ENCODE measurements at regions of chr17 and their contacts with region 1.

Region 1: DNA sequence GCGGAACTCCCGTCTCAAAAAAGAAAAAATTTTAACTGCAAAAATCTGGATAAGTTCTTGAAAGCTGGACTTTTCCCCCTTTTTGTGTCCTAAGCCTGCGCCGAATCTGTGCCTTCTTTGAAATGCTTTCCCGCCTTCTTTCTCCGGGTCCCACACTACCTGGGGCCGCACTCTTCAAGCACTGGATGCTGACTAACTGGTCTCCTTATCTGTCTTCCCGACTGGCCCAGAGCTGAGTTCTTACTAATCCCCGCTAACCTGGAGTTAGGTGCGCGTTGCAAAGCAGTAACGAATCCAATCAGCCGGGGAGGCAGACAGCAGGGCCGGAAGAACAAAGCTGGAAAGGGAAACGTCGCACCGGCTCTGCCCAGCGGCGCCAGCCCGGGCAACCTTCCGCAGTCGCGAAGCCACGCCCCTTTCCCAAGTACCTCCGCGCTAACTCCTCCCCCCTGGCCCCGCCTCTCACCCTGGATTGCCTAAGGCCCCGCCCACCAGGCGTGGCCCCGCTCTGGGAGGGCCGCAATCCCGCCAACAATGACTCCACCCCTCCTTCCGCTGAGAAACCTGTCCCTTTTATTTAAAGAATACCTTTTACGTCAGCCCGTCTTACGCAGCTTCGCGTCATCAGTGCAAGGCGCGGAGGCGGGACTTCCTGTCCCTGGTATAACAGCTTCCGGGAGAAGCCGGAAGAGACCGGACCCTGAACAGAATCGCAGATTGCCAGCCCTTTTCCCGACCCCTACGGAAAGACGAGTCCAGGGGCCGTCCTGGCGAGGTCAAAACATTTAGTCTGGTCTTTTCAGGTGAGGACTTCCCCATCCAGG is at the start of gene TMUB2:
- DNase-seq: peak; percentile 98
- H3K4me3 Mint-ChIP-seq: peak within 1 kb of the TSS; percentile 100
- H3K27ac Mint-ChIP-seq: peak within 1 kb of the TSS; percentile 99
- H3K4me1 Mint-ChIP-seq: peaks cover 17% of the 10 kb centered on the region
- H3K27me3 Mint-ChIP-seq: no peaks in the 10 kb centered on the region
- CTCF ChIP-seq: no peak
- total RNA-seq, gene TMUB2: 26.5 and 37.7 TPM in 2 replicates

Region 2: DNA sequence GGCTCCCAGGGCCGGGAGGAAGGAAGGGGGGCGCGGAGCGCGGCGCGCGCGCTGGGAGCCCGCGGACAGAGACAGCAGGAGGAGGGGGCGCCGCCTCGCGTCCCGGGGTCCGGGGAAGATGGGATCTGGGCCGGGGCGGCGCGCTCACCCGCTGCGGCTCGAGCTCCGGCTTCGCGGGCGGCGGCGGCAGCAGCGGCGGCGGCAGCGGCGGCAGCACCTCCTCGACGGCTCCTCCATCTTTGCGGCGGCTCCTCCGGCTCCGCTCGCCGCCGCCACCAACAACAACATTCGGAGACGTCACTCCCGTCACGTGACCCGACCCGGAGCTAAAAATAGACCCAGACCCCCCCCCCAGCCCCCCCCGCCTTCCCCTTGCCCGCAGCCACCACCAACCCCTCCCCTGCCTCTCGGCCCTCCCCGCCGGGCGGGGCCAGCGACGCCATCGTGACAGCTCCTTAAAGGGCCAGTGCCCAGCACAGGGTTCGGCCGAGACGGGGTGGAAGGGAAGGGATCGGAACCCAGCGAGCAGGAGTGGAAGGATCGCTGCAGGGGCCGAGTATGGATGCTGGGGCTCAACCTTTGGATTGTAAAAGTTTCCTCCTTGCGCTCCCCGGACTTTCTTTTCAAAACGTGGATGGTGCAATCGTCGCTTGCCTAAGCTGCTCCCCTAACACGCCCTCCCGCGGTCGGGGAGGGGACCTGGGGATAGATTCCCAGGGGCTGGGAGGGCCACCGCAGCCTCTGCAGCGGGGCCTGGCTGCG is 63.0 kb before region 1 on chr17 and contains the start of gene HDAC5:
- CTCF ChIA-PET with region 1: interaction called, 4 read pairs
- POLR2A ChIA-PET with region 1: interaction called, 30 read pairs
- intact Hi-C with region 1: no loop called
- DNase-seq: peak; percentile 92
- H3K4me3 Mint-ChIP-seq: peak within 1 kb of the TSS; percentile 86
- H3K27ac Mint-ChIP-seq: peak within 1 kb of the TSS; percentile 98
- H3K4me1 Mint-ChIP-seq: peaks cover 6% of the 10 kb centered on the region
- H3K27me3 Mint-ChIP-seq: no peaks in the 10 kb centered on the region
- CTCF ChIP-seq: peak; percentile 57
- total RNA-seq, gene HDAC5: 12.1 TPM in 2 replicates

Region 3: GRCh38 chr17:44152875-44153274 is 33.6 kb before region 1 on chr17:
- CTCF ChIA-PET with region 1: interaction called, 3 read pairs
- POLR2A ChIA-PET with region 1: interaction called, 18 read pairs
- intact Hi-C with region 1: no loop called
- DNase-seq: peak; percentile 78
- H3K4me3 Mint-ChIP-seq: peak overlapping the region; percentile 46
- H3K27ac Mint-ChIP-seq: peak overlapping the region; percentile 98
- H3K4me1 Mint-ChIP-seq: peaks cover 25% of the 10 kb centered on the region
- H3K27me3 Mint-ChIP-seq: no peaks in the 10 kb centered on the region
- CTCF ChIP-seq: no peak

Region 4: DNA sequence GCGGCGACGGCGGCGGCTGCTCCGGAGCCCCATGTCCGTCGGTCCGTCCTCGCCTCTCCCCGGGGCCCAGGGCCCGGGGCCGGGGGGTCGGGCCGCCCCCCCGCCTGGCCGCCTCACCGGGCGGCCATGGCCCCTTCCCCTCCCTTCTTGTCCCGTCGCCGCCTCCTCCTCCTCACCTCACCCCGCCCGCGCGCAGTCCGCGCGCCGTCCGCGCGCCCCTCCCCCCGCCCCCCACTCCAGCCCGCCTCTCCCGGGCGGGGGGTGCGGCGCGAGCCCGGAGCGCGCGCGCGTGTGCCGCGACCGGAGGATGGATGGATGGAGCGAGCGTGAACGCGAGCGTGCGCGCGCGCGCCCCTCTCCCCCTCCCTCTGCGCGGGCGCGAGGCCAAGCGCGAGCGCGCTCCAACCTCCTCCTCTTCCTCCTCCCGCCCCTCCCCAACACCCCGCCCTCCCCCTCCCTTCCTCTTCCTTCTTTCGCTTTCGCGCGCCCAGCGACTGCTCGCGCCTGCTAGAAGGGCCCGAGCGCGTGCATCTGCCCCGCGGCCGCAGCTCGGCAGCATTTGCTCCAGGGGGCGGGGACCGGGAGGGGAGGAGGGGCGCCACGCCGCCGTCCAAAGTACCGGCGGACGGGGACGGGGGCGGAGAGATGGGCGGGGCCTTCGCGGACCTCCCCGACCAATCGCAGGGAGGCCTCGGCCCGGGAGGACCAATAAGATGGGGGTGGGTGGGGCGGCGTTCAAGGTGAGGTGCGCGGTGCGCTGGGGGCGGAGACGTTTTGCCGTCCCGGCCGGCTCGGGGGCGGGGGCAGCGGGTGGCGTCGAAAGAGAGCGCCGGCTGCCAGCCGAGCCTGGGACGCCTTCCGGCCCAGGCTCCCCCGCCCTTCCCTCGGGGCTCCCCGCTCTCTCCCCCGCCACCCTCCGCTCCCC is 13.3 kb after region 1 on chr17 and contains the start of gene ATXN7L3:
- CTCF ChIA-PET with region 1: interaction called, 3 read pairs
- POLR2A ChIA-PET with region 1: interaction called, 51 read pairs
- intact Hi-C with region 1: no loop called
- DNase-seq: peak; percentile 97
- H3K4me3 Mint-ChIP-seq: peak within 1 kb of the TSS; percentile 89
- H3K27ac Mint-ChIP-seq: peak within 1 kb of the TSS; percentile 95
- H3K4me1 Mint-ChIP-seq: peaks cover 45% of the 10 kb centered on the region
- H3K27me3 Mint-ChIP-seq: no peaks in the 10 kb centered on the region
- CTCF ChIP-seq: no peak
- total RNA-seq, gene ATXN7L3: 65.7 and 74.8 TPM in 2 replicates

Region 5: GRCh38 chr17:44279666-44280391 is 93.3 kb after region 1 on chr17:
- CTCF ChIA-PET with region 1: no interaction called
- POLR2A ChIA-PET with region 1: no interaction called
- intact Hi-C with region 1: no loop called
- DNase-seq: peak; percentile 69
- H3K4me3 Mint-ChIP-seq: no peak overlapping the region
- H3K27ac Mint-ChIP-seq: no peak overlapping the region
- H3K4me1 Mint-ChIP-seq: no peaks in the 10 kb centered on the region
- H3K27me3 Mint-ChIP-seq: peaks cover 9% of the 10 kb centered on the region
- CTCF ChIP-seq: no peak

Region 6: GRCh38 chr17:44293509-44294226 is 107.1 kb after region 1 on chr17:
- CTCF ChIA-PET with region 1: no interaction called
- POLR2A ChIA-PET with region 1: no interaction called
- intact Hi-C with region 1: no loop called
- DNase-seq: no peak
- H3K4me3 Mint-ChIP-seq: no peak overlapping the region
- H3K27ac Mint-ChIP-seq: no peak overlapping the region
- H3K4me1 Mint-ChIP-seq: peaks cover 11% of the 10 kb centered on the region
- H3K27me3 Mint-ChIP-seq: peaks cover 13% of the 10 kb centered on the region
- CTCF ChIP-seq: no peak

Region 7: GRCh38 chr17:44331249-44331760 is 144.8 kb after region 1 on chr17:
- CTCF ChIA-PET with region 1: interaction called, 7 read pairs
- POLR2A ChIA-PET with region 1: interaction called, 17 read pairs
- intact Hi-C with region 1: no loop called
- DNase-seq: peak; percentile 80
- H3K4me3 Mint-ChIP-seq: peak overlapping the region; percentile 12
- H3K27ac Mint-ChIP-seq: no peak overlapping the region
- H3K4me1 Mint-ChIP-seq: peaks cover 6% of the 10 kb centered on the region
- H3K27me3 Mint-ChIP-seq: no peaks in the 10 kb centered on the region
- CTCF ChIP-seq: peak; percentile 74

Region 8: DNA sequence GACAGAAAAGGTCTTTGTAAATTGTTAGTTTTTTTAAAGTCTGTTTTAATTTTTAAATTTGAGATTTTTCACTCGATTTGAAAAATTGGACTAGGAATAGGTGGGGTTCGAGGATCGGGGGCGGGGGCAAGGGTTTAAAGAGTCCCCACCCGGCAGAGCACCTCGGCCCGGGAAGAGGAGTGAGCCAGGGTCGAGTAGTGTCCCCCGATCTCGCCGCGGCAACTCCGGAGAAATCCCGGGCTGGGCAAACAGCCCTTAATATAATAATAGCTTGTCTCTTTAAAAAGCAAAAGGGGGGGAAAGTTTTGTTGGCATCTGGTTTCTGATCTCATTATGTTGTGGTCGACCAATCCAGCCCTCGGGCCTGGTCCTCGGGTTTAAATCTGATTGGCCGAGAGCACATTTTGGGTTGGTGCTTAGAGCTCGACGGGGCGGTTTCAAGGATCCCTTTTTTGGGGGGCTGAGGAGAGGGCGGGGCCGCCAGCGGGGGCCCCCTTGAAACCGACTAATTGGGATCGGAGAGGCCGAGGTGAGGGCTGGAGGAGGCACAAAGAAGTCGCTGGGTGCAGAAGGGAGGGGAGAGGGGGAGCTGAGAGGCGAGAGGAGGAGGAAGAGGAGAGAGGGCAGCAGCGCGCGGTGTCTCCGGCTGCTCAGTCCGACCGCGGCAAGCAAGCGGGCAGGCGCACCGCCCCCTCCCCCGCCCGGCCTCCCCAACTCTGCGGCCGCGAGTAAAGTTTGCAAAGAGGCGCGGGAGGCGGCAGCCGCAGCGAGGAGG is 370.5 kb after region 1 on chr17 and contains the start of gene FZD2:
- CTCF ChIA-PET with region 1: no interaction called
- POLR2A ChIA-PET with region 1: no interaction called
- intact Hi-C with region 1: no loop called
- DNase-seq: peak; percentile 98
- H3K4me3 Mint-ChIP-seq: peak within 1 kb of the TSS; percentile 95
- H3K27ac Mint-ChIP-seq: peak within 1 kb of the TSS; percentile 100
- H3K4me1 Mint-ChIP-seq: peaks cover 30% of the 10 kb centered on the region
- H3K27me3 Mint-ChIP-seq: no peaks in the 10 kb centered on the region
- CTCF ChIP-seq: no peak
- total RNA-seq, gene FZD2: 6.8 and 10.1 TPM in 2 replicates